Activated CD8-positive, alpha-beta T cell treated with anti-CD3 and anti-CD28 coated beads for 36 hours (primary cell): ENCODE measurements at regions of chr1 and their contacts with region 1.

Region 1: GRCh38 chr1:180863158-180863775 is 49.4 kb upstream of the KIAA1614 start:
- DNase-seq: peak; percentile 22
- ATAC-seq: no peak
- H3K4me3 Mint-ChIP-seq: no peak overlapping the region
- H3K27ac Mint-ChIP-seq: no peak overlapping the region
- H3K4me1 Mint-ChIP-seq: no peaks in the 10 kb centered on the region
- H3K27me3 Mint-ChIP-seq: no peaks in the 10 kb centered on the region
- CTCF ChIP-seq: peak; percentile 94

Region 2: DNA sequence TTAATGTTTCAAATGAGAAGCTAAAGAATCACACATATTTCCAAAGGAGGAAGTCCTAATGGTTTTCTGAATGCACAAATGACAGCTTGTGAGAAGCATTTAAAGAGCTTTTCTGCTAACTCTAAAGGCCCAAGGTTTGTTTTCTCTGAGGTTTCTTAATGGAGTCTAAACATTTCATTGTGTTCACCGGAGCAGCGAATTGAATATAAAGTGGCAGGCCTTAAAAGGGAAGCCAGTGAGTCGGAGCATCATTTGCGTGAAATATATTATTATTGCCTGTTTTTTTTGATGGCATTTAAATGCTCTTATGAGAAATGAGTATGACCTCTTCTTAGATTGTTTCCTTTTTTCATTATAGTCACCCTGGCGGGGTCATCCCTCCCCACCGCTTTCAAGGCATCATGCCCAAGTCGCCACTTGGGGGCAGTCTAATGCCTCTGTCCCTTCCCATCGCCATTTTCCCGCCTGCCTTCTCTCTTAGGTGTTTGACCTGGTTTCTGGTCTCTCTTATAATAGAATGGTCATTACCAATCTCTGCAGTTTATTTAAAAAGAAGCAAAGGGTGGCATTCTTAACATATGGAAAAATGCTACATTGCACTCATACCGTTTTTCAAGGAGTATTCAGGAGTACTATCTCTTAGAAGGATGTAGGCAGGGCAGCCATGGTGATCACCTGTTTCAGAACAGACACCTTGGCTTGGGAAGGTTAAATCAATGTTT is 329.8 kb before region 1 on chr1:
- CTCF ChIA-PET with region 1: interaction called, 161 read pairs
- POLR2A ChIA-PET with region 1: no interaction called
- intact Hi-C with region 1: loop called (anchors 5 kb)
- DNase-seq: peak; percentile 80
- ATAC-seq: peak; percentile 79
- H3K4me3 Mint-ChIP-seq: no peak overlapping the region
- H3K27ac Mint-ChIP-seq: no peak overlapping the region
- H3K4me1 Mint-ChIP-seq: no peaks in the 10 kb centered on the region
- H3K27me3 Mint-ChIP-seq: peaks cover 2% of the 10 kb centered on the region
- CTCF ChIP-seq: peak; percentile 80

Region 3: GRCh38 chr1:180631766-180632325 is 231.4 kb before region 1 on chr1 and contains the start of gene XPR1:
- CTCF ChIA-PET with region 1: interaction called, 11 read pairs
- POLR2A ChIA-PET with region 1: no interaction called
- intact Hi-C with region 1: no loop called
- DNase-seq: peak; percentile 99
- ATAC-seq: peak; percentile 99
- H3K4me3 Mint-ChIP-seq: no peak within 1 kb of the TSS
- H3K27ac Mint-ChIP-seq: peak within 1 kb of the TSS; percentile 85
- H3K4me1 Mint-ChIP-seq: peaks cover 12% of the 10 kb centered on the region
- H3K27me3 Mint-ChIP-seq: no peaks in the 10 kb centered on the region
- CTCF ChIP-seq: no peak
- total RNA-seq, gene XPR1: 12.8 to 14.4 TPM

Region 4: DNA sequence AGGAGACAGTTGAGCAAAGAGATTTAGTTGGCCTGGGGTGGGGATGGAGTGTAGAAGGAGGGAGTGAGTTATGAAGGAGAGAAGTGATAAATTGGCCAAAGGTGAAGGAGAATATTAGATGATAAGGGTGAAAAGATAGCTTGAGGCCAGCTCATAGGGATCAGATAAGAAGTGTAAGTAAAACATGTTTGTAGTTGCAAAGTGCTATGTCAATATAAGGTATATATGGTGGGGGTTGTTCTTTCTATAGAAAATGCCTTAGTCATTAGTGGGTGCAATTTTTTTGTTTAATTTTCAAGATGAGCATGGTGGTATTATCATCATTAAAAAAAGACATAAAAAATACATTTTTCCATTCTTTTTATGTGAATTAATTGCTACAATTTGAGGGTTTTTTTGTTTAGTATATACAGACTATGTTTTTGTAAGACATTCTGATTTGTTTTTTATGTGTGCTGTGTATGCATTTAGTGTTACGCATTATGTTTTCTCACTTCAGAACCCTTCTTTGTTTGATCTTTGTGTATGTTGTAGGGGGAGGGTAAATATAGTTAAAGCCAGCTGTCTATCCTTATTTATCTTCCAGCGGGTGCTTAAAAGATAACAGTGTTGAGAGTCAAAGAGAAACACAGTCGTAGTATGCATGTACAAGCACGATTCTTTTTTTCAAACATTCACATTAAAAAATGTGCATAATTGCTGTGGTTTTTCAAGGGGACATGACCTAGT is 48.2 kb before region 1 on chr1:
- CTCF ChIA-PET with region 1: no interaction called
- POLR2A ChIA-PET with region 1: no interaction called
- intact Hi-C with region 1: no loop called
- DNase-seq: no peak
- ATAC-seq: no peak
- H3K4me3 Mint-ChIP-seq: no peak overlapping the region
- H3K27ac Mint-ChIP-seq: no peak overlapping the region
- H3K4me1 Mint-ChIP-seq: no peaks in the 10 kb centered on the region
- H3K27me3 Mint-ChIP-seq: no peaks in the 10 kb centered on the region
- CTCF ChIP-seq: no peak

Region 5: GRCh38 chr1:180851995-180852887 is 11.0 kb before region 1 on chr1:
- CTCF ChIA-PET with region 1: interaction called, 14 read pairs
- POLR2A ChIA-PET with region 1: no interaction called
- intact Hi-C with region 1: no loop called
- DNase-seq: no peak
- ATAC-seq: no peak
- H3K4me3 Mint-ChIP-seq: no peak overlapping the region
- H3K27ac Mint-ChIP-seq: no peak overlapping the region
- H3K4me1 Mint-ChIP-seq: peaks cover 14% of the 10 kb centered on the region
- H3K27me3 Mint-ChIP-seq: no peaks in the 10 kb centered on the region
- CTCF ChIP-seq: no peak

Region 6: DNA sequence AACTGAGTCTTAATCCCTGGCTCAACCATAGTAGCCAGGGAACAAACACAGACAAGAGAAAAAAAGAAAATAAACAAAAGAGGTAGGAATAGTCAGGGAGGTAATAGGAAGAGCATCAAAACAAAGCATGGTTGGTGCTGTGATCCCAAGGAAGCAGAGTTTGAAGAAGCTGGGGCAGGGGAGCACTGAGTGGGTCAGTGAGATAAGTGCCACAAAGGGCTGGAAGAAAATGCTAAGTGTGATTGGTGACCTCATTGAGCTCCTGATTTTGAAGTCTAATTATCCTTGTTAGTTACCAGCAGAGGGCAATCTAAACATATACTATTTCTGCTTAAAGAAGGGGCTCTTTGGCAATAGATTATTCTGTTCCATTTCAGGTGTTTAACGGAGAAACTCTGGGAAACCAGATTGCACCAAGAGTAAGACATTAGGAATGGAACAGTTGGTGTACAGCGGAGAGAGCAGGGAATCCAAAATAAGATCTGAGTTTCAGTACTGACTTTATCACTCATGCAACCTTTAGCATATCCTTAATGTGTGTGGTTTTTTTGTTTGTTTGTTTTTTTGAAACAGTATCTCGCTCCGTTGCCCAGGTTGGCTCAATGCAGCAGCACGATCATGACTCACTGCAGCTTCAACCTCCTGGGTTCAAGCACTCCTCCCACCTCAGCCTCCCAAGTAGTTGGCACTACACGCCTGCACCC is 18.7 kb after region 1 on chr1:
- CTCF ChIA-PET with region 1: interaction called, 15 read pairs
- POLR2A ChIA-PET with region 1: no interaction called
- intact Hi-C with region 1: no loop called
- DNase-seq: no peak
- ATAC-seq: peak; percentile 65
- H3K4me3 Mint-ChIP-seq: no peak overlapping the region
- H3K27ac Mint-ChIP-seq: peak overlapping the region; percentile 33
- H3K4me1 Mint-ChIP-seq: peaks cover 7% of the 10 kb centered on the region
- H3K27me3 Mint-ChIP-seq: no peaks in the 10 kb centered on the region
- CTCF ChIP-seq: peak; percentile 56